HEK293T (cell line): ENCODE measurements at regions of chr12 and their contacts with region 1.

Region 1: GRCh38 chr12:9741726-9742125 is 8.8 kb upstream of the CLECL1 start:
- DNase-seq: no peak

Region 2: DNA sequence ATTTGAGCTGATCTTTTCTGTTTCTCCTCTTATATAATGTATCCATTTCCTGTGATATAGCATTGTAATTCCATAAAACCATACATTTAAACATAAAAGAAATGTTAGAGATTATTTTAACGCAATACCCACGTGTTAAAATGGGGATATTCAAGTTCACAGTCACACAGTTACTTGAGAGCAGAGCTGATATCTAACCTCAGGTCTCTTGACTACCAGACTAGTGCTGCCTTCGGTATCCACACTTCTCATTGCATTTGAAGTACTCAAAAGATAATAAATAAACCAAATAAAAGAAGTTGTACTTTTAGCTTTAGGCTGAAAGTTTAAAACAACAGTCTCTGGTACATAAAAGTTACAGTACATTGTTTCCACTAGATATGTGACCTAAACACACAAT is 11.7 kb before region 1 on chr12:
- CTCF ChIA-PET with region 1: interaction called, 12 read pairs
- POLR2A ChIA-PET with region 1: no interaction called
- DNase-seq: no peak